Sciatic nerve (tissue), 2 donors: ENCODE measurements at regions of chr4 and their contacts with region 1.

Region 1: GRCh38 chr4:94870146-94870545 is 112.4 kb downstream of the BMPR1B start:
- DNase-seq: no peak
- ATAC-seq: no peak

Region 2: DNA sequence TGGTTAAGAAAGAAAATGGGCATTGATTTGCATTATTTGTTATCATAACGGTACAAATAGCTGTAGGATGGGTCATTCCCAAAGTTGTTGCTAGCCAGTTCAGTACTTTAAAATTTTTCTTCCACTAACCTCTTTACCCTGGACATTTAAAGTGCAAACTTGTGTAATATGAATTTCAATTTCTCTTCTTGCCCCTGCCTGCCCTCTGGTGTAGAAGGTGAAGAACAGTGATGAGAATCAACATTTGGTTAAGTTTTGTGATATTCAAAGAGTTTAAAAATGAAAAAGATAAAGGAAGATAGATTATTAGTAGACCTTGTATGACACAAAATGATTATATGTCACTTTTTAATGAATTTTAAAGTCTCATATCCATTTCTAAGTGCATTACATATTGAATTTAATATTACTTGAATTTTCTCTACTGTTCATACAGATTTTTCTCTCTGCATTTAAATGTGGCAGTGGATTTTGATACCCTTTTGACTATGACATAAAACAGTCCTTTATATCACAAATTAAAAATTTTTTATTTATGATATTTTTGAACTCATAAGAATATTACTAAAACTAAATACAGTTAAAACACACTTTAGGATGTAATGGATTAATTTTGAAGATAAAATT is 225.3 kb after region 1 on chr4:
- intact Hi-C with region 1: loop called (anchors 10 kb)
- DNase-seq: no peak
- ATAC-seq: peak; percentile 85